ENCODE measurements at regions of chr15 and their contacts with region 1.

Region 1: DNA sequence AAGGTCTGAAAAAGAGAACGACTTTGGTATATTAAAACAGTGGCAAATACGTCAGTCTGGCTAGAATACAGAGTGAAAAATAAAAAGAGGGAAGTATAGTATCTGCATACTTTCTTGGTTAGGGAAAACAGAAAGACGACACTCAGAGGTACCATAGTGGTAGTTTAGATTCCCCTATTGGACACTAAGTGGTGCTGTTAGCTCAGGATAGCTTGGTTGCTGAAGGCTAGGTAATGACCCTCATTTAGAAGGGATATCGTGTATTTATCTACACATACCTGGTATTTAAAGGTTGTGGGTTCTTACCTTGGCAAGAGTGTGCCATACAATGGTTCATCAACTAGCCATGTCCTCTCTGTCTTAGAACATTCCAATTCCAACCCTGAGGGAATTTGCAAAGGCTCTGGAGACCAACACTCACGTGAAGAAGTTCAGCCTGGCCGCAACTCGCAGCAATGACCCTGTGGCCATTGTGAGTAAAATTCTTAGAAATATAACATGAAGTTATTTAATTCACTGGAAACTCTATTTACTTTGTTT is 31.0 kb downstream of the TMOD2 start:
- DNase-seq: no peak
- ATAC-seq: no peak

Region 2: DNA sequence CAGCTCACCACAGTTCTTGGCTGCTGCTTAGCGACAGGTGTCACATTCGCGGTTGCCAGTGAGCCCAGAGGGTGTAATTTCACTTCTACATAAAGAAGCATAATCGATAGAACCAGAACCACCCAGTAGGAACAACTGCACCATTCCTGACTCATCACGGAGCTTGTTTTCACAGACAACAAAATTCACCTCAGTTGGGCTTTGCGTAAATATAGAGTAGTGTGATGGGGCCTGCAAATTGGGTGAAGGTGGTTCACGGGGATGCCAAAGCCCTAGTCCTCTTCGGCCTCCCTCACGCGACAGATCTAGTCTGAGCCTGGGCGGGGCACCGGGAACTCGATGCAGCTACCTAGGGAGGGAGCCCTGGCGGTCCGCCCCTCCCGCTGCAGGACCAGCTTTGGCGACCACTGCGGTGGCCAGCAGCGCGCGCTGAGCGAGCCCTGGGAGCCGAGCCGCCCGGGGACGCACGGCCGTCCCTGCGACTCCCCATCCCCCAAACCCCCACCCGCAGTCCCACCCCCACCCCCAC is 45.6 kb before region 1 on chr15:
- intact Hi-C with region 1: no loop called
- DNase-seq: peak; percentile 62
- ATAC-seq: peak; percentile 59

Region 3: GRCh38 chr15:51907136-51907914 is 124.9 kb after region 1 on chr15:
- intact Hi-C with region 1: loop called (anchors 10 kb)
- DNase-seq: no peak
- ATAC-seq: no peak

Region 4: DNA sequence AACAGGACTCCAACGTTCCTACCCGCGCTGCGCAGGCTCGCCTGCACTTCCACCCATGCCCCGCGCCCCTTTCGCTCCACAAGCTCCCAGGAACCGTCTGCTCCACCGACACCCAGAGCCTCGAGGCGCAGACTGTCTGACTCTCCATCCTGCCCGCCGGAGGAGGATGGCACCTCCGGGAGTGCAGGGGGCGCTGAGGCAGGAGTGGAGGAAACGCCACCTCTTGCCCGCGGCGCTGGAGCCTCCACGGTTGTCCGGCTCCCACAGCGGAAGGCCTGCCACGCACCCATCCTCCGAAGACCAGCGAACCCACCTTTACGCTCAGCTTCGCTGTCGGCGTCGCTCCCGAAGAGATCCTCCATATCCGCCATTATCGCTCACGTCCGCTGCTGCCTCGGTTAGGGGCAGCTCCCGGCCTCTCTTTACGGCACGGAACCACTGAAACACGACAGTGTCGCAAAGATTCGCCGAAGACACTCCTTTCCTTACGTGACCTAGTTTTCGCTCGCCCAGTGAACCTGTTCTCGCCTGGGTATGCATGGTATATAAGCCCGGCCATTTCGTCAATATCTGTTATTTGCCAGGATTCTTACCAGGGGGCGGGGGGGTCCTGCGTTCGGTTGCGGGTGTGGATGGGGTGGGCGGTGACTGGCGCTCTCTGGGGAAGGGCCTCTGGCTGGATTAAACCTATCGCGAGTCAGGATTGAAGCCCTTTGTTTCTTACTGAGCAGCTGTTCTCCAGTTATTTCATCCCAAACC is 189.1 kb after region 1 on chr15 and contains the start of gene LEO1:
- intact Hi-C with region 1: no loop called
- DNase-seq: peak; percentile 88
- ATAC-seq: peak; percentile 98
- total RNA-seq, gene LEO1: 9.0 TPM